Activated CD4-positive, alpha-beta T cell treated with anti-CD3 and anti-CD28 coated beads, Interleukin-2, amount 10 ng/mL, durations not matched to agents 24 days and 14 days (primary cell): ENCODE measurements at regions of chr6 and their contacts with region 1.

Region 1: DNA sequence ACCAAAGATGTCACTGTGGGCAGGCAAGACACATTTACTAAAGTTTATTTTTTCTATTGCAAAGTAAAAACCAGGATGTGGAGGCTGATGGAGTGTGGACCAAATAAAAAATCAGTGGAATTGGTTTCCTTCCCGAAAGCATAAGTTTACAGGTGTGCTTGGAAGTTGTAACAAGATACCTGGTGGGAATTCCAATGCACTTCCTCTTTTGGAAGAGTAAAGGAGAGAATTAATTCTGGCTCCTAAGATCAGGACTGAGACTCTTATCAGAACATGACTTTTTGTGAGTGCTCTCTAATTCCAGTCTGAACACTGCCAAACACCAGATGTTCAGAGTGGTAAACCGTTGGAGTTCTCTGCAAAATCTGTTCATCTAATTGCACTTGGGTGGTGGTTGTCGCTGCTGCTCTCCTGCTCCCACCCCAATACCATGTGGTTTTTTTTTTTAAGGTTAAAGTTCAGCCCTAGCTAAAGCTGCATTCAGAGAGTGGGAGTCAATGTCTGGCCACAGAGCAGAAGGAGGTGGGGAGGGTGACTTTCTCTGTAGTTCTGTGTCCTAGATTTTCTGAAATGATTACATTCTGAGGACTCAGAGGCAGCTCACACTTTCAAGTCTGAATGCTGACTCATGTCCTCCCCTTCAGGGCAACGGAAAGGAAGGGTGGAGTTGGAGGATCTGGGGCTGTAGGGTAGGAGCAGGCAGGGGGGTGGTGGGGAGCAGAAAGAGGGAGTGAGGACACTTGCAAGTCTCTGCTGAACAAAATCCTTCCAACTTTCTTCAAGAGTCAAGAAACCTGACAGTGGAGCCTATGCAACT is 275.8 kb upstream of the PRDM1 start:
- DNase-seq: peak; percentile 89
- H3K4me3 Mint-ChIP-seq: peak overlapping the region; percentile 45
- H3K27ac Mint-ChIP-seq: peak overlapping the region; percentile 71
- H3K4me1 Mint-ChIP-seq: peaks cover 67% of the 10 kb centered on the region
- H3K27me3 Mint-ChIP-seq: no peaks in the 10 kb centered on the region

Region 2: DNA sequence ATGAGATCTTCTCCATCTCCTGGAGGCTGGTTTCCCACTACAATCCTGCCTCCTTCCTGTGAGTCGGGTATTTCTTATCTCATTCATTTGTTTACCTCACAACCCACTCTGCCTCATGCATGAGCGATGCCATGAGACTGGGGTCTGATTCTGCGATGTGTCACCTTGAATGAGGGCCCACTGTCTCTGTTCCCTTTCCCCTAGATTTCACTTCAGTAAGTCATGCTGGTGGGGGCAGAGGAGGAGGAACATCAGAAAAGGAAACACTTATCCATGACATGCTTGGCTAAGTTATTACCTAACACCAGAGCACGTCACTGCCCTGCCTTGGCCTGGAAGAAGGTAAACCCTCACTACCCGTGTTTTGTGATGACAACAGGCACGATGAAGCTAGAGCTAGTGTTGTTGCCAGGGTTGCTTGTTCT is 61.6 kb before region 1 on chr6:
- intact Hi-C with region 1: no loop called
- DNase-seq: no peak
- H3K4me3 Mint-ChIP-seq: no peak overlapping the region
- H3K27ac Mint-ChIP-seq: peak overlapping the region; percentile 39
- H3K4me1 Mint-ChIP-seq: peaks cover 44% of the 10 kb centered on the region
- H3K27me3 Mint-ChIP-seq: peaks cover 3% of the 10 kb centered on the region

Region 3: GRCh38 chr6:105780146-105780860 is 30.0 kb before region 1 on chr6:
- intact Hi-C with region 1: no loop called
- DNase-seq: no peak
- H3K4me3 Mint-ChIP-seq: no peak overlapping the region
- H3K27ac Mint-ChIP-seq: no peak overlapping the region
- H3K4me1 Mint-ChIP-seq: peaks cover 32% of the 10 kb centered on the region
- H3K27me3 Mint-ChIP-seq: no peaks in the 10 kb centered on the region

Region 4: GRCh38 chr6:105880030-105880492 is 69.7 kb after region 1 on chr6:
- intact Hi-C with region 1: loop called (anchors 2 kb)
- DNase-seq: peak; percentile 70
- H3K4me3 Mint-ChIP-seq: peak overlapping the region; percentile 70
- H3K27ac Mint-ChIP-seq: peak overlapping the region; percentile 25
- H3K4me1 Mint-ChIP-seq: peaks cover 39% of the 10 kb centered on the region
- H3K27me3 Mint-ChIP-seq: peaks cover 3% of the 10 kb centered on the region

Region 5: GRCh38 chr6:106184629-106185028 is 374.3 kb after region 1 on chr6:
- intact Hi-C with region 1: loop called (anchors 5 kb)
- DNase-seq: peak; percentile 49
- H3K4me3 Mint-ChIP-seq: no peak overlapping the region
- H3K27ac Mint-ChIP-seq: no peak overlapping the region
- H3K4me1 Mint-ChIP-seq: peaks cover 47% of the 10 kb centered on the region
- H3K27me3 Mint-ChIP-seq: no peaks in the 10 kb centered on the region

Region 6: GRCh38 chr6:106556368-106556960 is 746.2 kb after region 1 on chr6:
- intact Hi-C with region 1: no loop called
- DNase-seq: no peak
- H3K4me3 Mint-ChIP-seq: no peak overlapping the region
- H3K27ac Mint-ChIP-seq: no peak overlapping the region
- H3K4me1 Mint-ChIP-seq: peaks cover 24% of the 10 kb centered on the region
- H3K27me3 Mint-ChIP-seq: no peaks in the 10 kb centered on the region